ENCODE measurements at regions of chr15 and their contacts with region 1.

Region 1: DNA sequence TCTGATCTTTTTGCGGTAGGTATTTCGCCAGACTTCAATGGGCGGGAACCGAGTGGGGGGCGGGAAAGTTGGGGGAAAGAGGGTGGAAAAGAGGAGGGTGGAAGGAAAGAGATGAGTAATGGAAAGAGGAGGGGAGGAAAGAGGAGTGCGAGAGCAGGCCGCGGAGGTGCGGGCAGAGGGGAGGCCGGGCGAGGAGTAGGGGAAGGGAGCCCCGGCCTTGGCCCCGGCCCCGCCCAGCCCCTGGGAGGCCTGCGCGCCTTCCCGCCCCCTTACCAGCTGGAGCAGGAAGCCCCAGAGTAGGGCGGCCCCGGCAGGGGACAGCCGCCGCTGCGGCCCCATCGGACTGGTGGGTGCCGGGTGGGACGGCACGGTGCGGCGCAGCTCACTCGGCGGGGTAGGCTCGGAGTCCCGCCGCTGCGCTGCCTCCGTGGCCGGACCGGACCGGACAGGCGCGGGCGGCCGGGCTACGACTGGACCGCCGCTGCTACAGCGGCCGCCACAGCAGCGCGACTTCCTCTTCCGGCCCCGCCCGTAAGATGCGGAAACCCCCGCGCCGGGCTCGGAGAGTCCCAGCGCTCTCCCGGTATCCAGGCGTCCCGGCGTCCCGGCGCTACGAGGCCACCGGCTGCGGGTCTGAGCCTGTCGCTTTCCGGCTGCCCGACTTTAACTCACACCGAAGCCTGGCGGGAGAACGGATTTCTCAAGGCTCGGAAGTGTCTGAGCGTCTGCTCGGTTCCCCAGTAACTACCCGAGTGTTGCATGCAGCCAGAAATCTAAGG is at the start of gene SPPL2A:
- DNase-seq: peak; percentile 45 to 90 (median 61)
- ATAC-seq: peak; percentile 91
- H3K4me3 ChIP-seq: peak within 1 kb of the TSS; percentile 77
- H3K4me3 Mint-ChIP-seq: peak within 1 kb of the TSS; percentile 81 to 97 (median 94)
- H3K27ac ChIP-seq: peak within 1 kb of the TSS; percentile 90
- H3K27ac Mint-ChIP-seq: peak within 1 kb of the TSS; percentile 85 to 98 (median 93)
- H3K4me1 ChIP-seq: no peaks in the 10 kb centered on the region
- H3K4me1 Mint-ChIP-seq: peaks cover 27 to 58% (median 51%) of the 10 kb centered on the region in 7 donors
- H3K27me3 ChIP-seq: no peaks in the 10 kb centered on the region
- H3K27me3 Mint-ChIP-seq: no peaks in the 10 kb centered on the region
- total RNA-seq, gene SPPL2A: 42.1 to 100 (median 58.1) TPM

Region 2: DNA sequence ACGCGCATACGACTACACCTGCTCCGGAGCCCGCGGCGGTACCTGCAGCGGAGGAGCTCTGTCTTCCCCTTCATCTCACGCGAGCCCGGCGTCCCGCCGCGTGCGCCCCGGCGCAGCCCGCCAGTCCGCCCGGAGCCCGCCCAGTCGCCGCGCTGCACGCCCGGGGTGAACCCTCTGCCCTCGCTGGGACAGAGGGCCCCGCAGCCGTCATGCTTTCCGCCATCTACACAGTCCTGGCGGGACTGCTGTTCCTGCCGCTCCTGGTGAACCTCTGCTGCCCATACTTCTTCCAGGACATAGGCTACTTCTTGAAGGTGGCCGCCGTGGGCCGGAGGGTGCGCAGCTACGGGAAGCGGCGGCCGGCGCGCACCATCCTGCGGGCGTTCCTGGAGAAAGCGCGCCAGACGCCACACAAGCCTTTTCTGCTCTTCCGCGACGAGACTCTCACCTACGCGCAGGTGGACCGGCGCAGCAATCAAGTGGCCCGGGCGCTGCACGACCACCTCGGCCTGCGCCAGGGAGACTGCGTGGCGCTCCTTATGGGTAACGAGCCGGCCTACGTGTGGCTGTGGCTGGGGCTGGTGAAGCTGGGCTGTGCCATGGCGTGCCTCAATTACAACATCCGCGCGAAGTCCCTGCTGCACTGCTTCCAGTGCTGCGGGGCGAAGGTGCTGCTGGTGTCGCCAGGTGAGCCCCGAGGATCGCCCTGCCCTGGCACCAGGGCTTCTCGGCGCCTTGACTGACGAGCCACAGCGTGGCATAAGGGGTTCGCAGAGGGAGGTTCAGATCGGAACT is 583.0 kb before region 1 on chr15:
- CTCF ChIA-PET with region 1: no interaction called
- POLR2A ChIA-PET with region 1: no interaction called
- intact Hi-C with region 1: loop called in 1 of 2 experiments (anchors 10 kb)
- DNase-seq: peak in 6 of 9 donors; percentile 13 to 65 (median 21)
- ATAC-seq: peak; percentile 56
- H3K4me3 ChIP-seq: peak overlapping the region; percentile 67
- H3K4me3 Mint-ChIP-seq: peak overlapping the region; percentile 82 to 98 (median 90)
- H3K27ac ChIP-seq: no peak overlapping the region
- H3K27ac Mint-ChIP-seq: peak overlapping the region in 3 of 9 donors; percentile 39 to 85 (median 54)
- H3K4me1 ChIP-seq: peaks cover 0 to 6% of the 10 kb centered on the region in 2 donors
- H3K4me1 Mint-ChIP-seq: peaks cover 7 to 56% (median 12%) of the 10 kb centered on the region in 7 donors
- H3K27me3 ChIP-seq: no peaks in the 10 kb centered on the region
- H3K27me3 Mint-ChIP-seq: peaks cover 0 to 53% (median 38%) of the 10 kb centered on the region in 5 donors

Region 3: GRCh38 chr15:50686468-50687301 is 78.7 kb before region 1 on chr15 and contains the start of gene TRPM7:
- CTCF ChIA-PET with region 1: no interaction called
- POLR2A ChIA-PET with region 1: interaction called, 8 read pairs
- intact Hi-C with region 1: loop called (anchors 1 kb)
- DNase-seq: peak; percentile 83 to 93 (median 90)
- ATAC-seq: peak; percentile 91
- H3K4me3 ChIP-seq: peak within 1 kb of the TSS; percentile 99
- H3K4me3 Mint-ChIP-seq: peak within 1 kb of the TSS; percentile 86 to 100 (median 97)
- H3K27ac ChIP-seq: peak within 1 kb of the TSS; percentile 93
- H3K27ac Mint-ChIP-seq: peak within 1 kb of the TSS; percentile 91 to 99 (median 97)
- H3K4me1 ChIP-seq: peaks cover 16 to 26% of the 10 kb centered on the region in 2 donors
- H3K4me1 Mint-ChIP-seq: peaks cover 42 to 62% (median 51%) of the 10 kb centered on the region in 7 donors
- H3K27me3 ChIP-seq: no peaks in the 10 kb centered on the region
- H3K27me3 Mint-ChIP-seq: no peaks in the 10 kb centered on the region
- total RNA-seq, gene TRPM7: 36.1 to 62.3 (median 45.2) TPM

Region 4: GRCh38 chr15:50751394-50751793 is 14.0 kb before region 1 on chr15:
- CTCF ChIA-PET with region 1: interaction called, 3 read pairs
- POLR2A ChIA-PET with region 1: interaction called, 6 read pairs
- intact Hi-C with region 1: loop called in 1 of 2 experiments (anchors 2 kb)
- DNase-seq: no peak
- ATAC-seq: peak; percentile 64
- H3K4me3 ChIP-seq: no peak overlapping the region
- H3K4me3 Mint-ChIP-seq: no peak overlapping the region
- H3K27ac ChIP-seq: no peak overlapping the region
- H3K27ac Mint-ChIP-seq: no peak overlapping the region
- H3K4me1 ChIP-seq: peaks cover 0 to 15% of the 10 kb centered on the region in 2 donors
- H3K4me1 Mint-ChIP-seq: peaks cover 5 to 39% (median 19%) of the 10 kb centered on the region in 7 donors
- H3K27me3 ChIP-seq: no peaks in the 10 kb centered on the region
- H3K27me3 Mint-ChIP-seq: no peaks in the 10 kb centered on the region